ENCODE measurements at regions of chr1 and their contacts with region 1.

Region 1: GRCh38 chr1:194279975-194280374 is 1093.6 kb upstream of the B3GALT2 start:
- DNase-seq: no peak
- ATAC-seq: no peak
- H3K4me3 ChIP-seq: no peak overlapping the region
- H3K4me3 Mint-ChIP-seq: no peak overlapping the region
- H3K27ac ChIP-seq: no peak overlapping the region
- H3K27ac Mint-ChIP-seq: no peak overlapping the region
- H3K4me1 ChIP-seq: no peaks in the 10 kb centered on the region
- H3K4me1 Mint-ChIP-seq: peaks cover 11% of the 10 kb centered on the region
- H3K27me3 ChIP-seq: no peaks in the 10 kb centered on the region
- H3K27me3 Mint-ChIP-seq: no peaks in the 10 kb centered on the region
- CTCF ChIP-seq: no peak

Region 2: GRCh38 chr1:193069748-193070385 is 1210.1 kb before region 1 on chr1:
- CTCF ChIA-PET with region 1: no interaction called
- POLR2A ChIA-PET with region 1: no interaction called
- intact Hi-C with region 1: no loop called
- DNase-seq: peak in 2 of 9 experiments; percentile 32 to 51
- ATAC-seq: peak; percentile 52
- H3K4me3 ChIP-seq: no peak overlapping the region
- H3K4me3 Mint-ChIP-seq: no peak overlapping the region
- H3K27ac ChIP-seq: peak overlapping the region in 1 of 2 experiments; percentile 74
- H3K27ac Mint-ChIP-seq: peak overlapping the region; percentile 73
- H3K4me1 ChIP-seq: peaks cover 15% of the 10 kb centered on the region
- H3K4me1 Mint-ChIP-seq: peaks cover 59% of the 10 kb centered on the region
- H3K27me3 ChIP-seq: no peaks in the 10 kb centered on the region
- H3K27me3 Mint-ChIP-seq: no peaks in the 10 kb centered on the region
- CTCF ChIP-seq: no peak

Region 3: DNA sequence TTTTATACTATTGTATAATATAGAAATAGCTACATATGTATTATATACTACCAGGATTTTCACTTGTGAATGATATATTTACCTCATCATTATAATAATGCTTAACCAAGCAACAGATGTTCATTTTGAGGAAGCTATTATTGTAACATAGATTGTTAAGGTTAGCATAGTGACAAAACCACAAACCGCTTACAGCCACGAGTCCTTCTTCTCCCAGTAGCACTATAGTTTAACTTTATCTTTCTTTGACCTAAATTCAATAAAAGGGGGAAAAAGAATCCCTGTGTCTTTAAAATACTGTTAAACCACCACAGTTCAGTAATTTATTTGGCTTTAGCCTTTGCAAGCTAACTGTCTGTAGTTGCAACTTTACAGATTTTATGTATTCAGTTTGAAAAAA is 54.2 kb before region 1 on chr1:
- CTCF ChIA-PET with region 1: no interaction called
- POLR2A ChIA-PET with region 1: no interaction called
- intact Hi-C with region 1: loop called in 1 of 2 experiments (anchors 5 kb)
- DNase-seq: peak in 2 of 9 experiments; percentile 36 to 49
- ATAC-seq: peak; percentile 56
- H3K4me3 ChIP-seq: no peak overlapping the region
- H3K4me3 Mint-ChIP-seq: no peak overlapping the region
- H3K27ac ChIP-seq: no peak overlapping the region
- H3K27ac Mint-ChIP-seq: no peak overlapping the region
- H3K4me1 ChIP-seq: peaks cover 11% of the 10 kb centered on the region
- H3K4me1 Mint-ChIP-seq: peaks cover 18% of the 10 kb centered on the region
- H3K27me3 ChIP-seq: no peaks in the 10 kb centered on the region
- H3K27me3 Mint-ChIP-seq: no peaks in the 10 kb centered on the region
- CTCF ChIP-seq: no peak